ENCODE measurements at regions of chr4 and their contacts with region 1.

Region 1: DNA sequence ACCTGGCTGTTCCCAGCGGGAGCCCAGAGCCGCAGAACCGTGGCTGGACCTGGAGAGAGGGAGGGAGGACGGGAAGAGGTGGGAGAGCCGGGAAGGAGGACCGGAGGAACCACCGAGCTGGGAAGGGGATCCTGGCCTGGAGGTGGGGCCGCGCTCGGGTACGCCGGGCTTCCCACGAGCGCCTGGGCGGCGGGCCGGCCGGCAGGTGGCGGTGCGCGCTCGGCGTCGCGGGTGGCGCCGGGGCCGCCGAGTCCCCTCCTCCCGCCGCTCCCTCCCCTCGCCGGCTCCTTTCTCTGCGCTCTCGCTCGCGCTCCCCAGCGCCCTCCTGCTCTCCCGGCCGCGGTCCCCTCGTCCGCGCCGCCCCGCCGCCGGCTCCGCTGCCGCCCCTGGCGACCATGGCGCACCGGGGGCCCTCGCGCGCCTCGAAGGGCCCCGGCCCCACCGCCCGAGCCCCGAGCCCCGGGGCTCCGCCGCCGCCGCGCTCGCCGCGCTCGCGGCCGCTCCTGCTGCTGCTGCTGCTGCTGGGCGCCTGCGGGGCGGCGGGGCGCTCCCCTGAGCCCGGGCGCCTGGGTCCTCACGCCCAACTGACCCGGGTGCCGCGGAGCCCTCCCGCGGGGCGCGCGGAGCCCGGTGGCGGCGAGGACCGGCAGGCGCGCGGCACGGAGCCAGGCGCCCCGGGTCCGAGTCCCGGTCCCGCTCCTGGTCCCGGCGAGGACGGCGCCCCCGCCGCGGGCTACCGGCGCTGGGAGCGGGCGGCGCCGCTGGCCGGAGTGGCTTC is at the start of gene SORCS2:
- DNase-seq: peak; percentile 85
- H3K4me3 ChIP-seq: peak within 1 kb of the TSS; percentile 56
- H3K27ac ChIP-seq: no peak within 1 kb of the TSS
- H3K4me1 ChIP-seq: peaks cover 7% of the 10 kb centered on the region
- H3K27me3 ChIP-seq: peaks cover 40% of the 10 kb centered on the region
- total RNA-seq, gene SORCS2: 1.4 and 4.3 TPM in 2 replicates

Region 2: GRCh38 chr4:6806924-6807636 is 385.4 kb before region 1 on chr4:
- in situ Hi-C with region 1: no loop called
- DNase-seq: peak; percentile 18
- H3K4me3 ChIP-seq: no peak overlapping the region
- H3K27ac ChIP-seq: peak overlapping the region; percentile 51
- H3K4me1 ChIP-seq: peaks cover 24% of the 10 kb centered on the region
- H3K27me3 ChIP-seq: no peaks in the 10 kb centered on the region

Region 3: DNA sequence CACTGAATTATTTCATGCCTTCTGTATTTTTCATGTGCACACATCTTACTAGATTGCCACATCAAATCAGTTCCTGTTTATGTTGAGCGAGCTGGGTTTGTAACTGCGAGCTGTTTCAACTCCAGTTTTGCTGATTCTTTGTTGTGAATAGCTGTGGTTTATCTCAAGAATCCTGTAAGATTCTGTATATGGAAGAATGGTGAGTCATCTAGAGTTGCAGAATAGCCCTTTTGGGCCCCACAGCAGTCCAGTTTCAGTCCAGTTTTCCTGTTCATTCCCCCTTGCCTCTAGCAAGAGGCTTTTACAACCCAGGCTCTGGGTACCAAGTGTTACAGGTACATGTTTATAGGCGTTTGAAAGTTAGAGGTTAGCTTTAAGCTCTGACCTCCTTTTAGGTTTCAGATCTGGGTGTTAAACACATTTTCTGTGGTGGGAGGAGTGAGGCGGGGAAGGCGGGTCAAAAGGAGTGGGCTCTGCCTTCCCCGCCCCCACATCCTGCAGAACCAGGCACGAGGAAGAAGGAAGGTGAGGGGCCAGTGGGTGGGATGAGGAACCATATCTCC is 250.1 kb before region 1 on chr4:
- in situ Hi-C with region 1: no loop called
- DNase-seq: peak; percentile 98
- H3K4me3 ChIP-seq: peak overlapping the region; percentile 64
- H3K27ac ChIP-seq: peak overlapping the region; percentile 87
- H3K4me1 ChIP-seq: peaks cover 19% of the 10 kb centered on the region
- H3K27me3 ChIP-seq: no peaks in the 10 kb centered on the region

Region 4: DNA sequence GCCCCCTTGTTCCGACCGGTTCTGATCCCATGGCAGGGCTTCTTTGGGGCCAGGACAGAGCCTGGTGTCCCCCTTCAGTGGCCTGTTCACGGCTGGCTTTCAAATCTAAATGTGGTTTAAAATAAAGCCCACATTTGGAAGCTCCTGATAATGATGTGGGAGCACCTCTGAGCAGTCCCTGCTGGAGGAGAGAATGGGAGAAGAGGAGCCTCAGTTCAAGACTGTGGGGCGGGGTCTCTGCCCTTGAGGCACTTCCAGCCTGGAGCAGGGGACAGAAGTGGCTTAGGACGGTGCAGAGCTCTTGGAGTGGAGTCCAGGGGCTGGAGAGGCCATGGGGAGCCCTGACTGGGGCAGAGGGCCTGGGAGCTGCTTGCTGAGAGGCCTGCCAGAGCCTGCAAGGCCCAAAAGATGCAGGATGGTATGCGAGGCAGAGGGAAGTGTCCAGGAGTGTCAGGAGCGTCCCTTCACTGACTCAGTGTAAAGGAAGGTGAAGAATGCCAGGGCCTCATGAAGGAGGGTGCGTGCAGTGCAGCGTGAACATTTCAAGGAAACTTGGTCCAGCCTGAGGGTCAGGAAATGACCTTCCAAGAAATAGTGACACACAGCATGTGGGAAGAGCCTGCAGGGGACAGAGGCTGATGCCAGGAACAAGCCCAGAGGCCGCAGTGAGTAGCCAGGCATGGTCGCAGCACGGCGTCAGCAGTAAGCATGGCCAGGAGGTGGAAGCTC is 170.3 kb before region 1 on chr4:
- in situ Hi-C with region 1: no loop called
- DNase-seq: peak; percentile 95
- H3K4me3 ChIP-seq: no peak overlapping the region
- H3K27ac ChIP-seq: peak overlapping the region; percentile 90
- H3K4me1 ChIP-seq: peaks cover 15% of the 10 kb centered on the region
- H3K27me3 ChIP-seq: no peaks in the 10 kb centered on the region

Region 5: GRCh38 chr4:7295911-7296660 is 103.6 kb after region 1 on chr4:
- in situ Hi-C with region 1: loop called (anchors 10 kb)
- DNase-seq: peak; percentile 62
- H3K4me3 ChIP-seq: no peak overlapping the region
- H3K27ac ChIP-seq: no peak overlapping the region
- H3K4me1 ChIP-seq: no peaks in the 10 kb centered on the region
- H3K27me3 ChIP-seq: no peaks in the 10 kb centered on the region

Region 6: DNA sequence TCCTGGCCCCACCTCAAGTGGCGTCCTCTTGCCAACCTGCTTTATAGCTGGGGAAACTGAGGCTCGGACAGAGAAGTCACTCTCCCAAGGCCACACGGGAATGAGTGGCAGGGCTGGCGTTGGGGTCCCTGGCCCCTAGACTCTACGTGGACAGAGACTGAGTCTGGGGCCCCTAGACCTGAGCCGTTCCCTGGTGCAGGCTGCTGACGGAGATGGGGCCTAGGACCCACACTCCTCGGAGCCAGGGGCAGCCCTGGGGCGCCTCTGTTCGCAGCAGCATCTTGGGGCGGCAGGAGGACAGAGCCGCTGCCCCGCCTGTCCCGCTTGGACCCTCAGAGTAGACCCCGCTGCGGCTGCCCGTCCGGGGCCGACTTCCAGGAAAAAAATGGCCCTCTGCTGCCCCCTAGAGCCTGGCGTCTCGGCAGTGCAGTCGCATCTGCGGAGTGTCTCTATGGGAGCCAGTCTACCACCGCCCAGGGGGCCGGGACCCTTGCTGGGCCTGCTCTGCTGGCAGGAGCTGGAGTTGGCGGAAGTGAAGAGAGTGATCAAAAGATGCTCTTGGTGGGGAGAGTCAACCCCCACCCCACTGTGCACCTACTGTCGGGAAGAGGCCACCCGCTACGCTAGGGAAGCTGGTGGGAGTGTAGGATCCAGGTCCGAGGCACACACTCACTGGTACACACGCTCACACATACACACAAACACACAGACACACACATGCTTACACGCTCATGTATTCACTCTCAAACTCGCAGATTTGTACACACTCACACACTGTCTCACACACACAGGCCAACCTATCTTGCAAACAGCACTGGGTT is 527.1 kb after region 1 on chr4:
- in situ Hi-C with region 1: loop called (anchors 25 kb)
- DNase-seq: peak; percentile 57
- H3K4me3 ChIP-seq: no peak overlapping the region
- H3K27ac ChIP-seq: no peak overlapping the region
- H3K4me1 ChIP-seq: no peaks in the 10 kb centered on the region
- H3K27me3 ChIP-seq: no peaks in the 10 kb centered on the region

Measured in GM23248 (cell line).